Transverse colon (tissue), 4 donors: ENCODE measurements at regions of chr3 and their contacts with region 1.

Region 1: DNA sequence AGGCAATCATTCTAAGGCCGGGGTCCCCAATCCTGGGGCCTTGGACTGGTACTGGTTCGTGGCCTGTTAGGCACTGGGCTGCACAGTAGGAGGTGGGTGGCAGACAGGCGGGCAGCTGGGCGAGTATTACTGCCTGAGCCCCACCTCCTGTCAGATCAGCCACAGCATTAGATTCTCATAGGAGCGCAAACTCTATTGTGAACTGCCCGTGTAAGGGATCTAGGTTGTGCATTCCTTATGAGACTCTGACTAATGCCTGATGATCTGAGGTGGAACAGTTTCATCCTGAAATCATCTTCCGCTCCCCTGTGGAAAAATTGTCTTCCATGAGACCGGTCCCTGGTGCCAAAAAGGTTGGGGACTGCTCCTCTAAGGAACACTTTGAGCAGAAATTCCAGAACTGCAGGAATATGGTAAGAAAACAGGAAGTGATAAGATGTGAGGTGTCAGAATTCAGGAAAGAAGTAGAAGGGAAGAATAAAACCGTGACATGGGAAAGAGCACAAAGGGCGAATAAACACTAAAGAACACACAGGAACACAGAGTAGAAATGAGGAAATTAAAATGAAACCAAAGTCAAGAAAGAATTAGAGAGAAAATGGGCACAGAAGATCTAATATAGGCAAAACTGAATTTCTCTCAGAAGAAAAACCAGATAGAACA is 57.6 kb downstream of the PDCD6IP start:
- DNase-seq: no peak
- H3K4me3 ChIP-seq: no peak overlapping the region
- H3K27ac ChIP-seq: no peak overlapping the region
- H3K4me1 ChIP-seq: peaks cover 0 to 4% (median 0%) of the 10 kb centered on the region in 4 donors
- H3K27me3 ChIP-seq: no peaks in the 10 kb centered on the region
- CTCF ChIP-seq: no peak
- EP300 ChIP-seq: no peak
- POLR2A ChIP-seq: no peak

Region 2: GRCh38 chr3:33732394-33732793 is 123.6 kb before region 1 on chr3:
- in situ Hi-C with region 1: no loop called
- intact Hi-C with region 1: no loop called
- DNase-seq: no peak
- H3K4me3 ChIP-seq: no peak overlapping the region
- H3K27ac ChIP-seq: no peak overlapping the region
- H3K4me1 ChIP-seq: no peaks in the 10 kb centered on the region
- H3K27me3 ChIP-seq: no peaks in the 10 kb centered on the region
- CTCF ChIP-seq: no peak
- EP300 ChIP-seq: no peak
- POLR2A ChIP-seq: no peak

Region 3: DNA sequence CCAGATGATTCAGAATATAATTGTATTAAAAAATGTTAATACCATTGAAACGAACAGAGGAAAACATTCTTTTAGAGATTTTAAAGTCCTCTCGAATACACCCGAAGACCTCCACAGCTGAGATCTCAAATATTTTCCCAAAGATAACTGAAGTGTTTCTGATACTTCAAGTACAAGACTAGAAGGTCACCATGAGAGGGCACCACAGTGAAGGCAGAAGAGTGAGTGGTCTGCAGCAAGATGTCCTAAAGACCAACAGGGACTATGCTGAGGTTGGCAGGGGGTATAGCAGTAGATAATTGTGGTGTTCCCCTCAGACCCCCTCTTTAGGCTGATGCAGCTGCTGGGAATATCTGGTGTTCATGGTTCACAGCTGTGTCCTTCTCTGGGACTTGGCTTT is 98.9 kb after region 1 on chr3:
- in situ Hi-C with region 1: loop called in 1 of 4 experiments (anchors 25 kb)
- intact Hi-C with region 1: no loop called
- DNase-seq: no peak
- H3K4me3 ChIP-seq: no peak overlapping the region
- H3K27ac ChIP-seq: no peak overlapping the region
- H3K4me1 ChIP-seq: no peaks in the 10 kb centered on the region
- H3K27me3 ChIP-seq: no peaks in the 10 kb centered on the region
- CTCF ChIP-seq: no peak
- EP300 ChIP-seq: no peak
- POLR2A ChIP-seq: no peak